Dorsolateral prefrontal cortex (tissue), 120 donors: ENCODE measurements at regions of chr22 and their contacts with region 1.

Region 1: GRCh38 chr22:48629631-48630432 is 1197.8 kb downstream of the BRD1 start:
- DNase-seq: peak in 9 of 10 donors; percentile 60 to 86 (median 80)
- H3K4me3 ChIP-seq: peak overlapping the region in 7 of 59 donors; percentile 7 to 51 (median 30)
- H3K27ac ChIP-seq: peak overlapping the region in 58 of 59 donors; percentile 50 to 99 (median 92)
- H3K27me3 ChIP-seq: no peaks in the 10 kb centered on the region
- CTCF ChIP-seq: no peak

Region 2: DNA sequence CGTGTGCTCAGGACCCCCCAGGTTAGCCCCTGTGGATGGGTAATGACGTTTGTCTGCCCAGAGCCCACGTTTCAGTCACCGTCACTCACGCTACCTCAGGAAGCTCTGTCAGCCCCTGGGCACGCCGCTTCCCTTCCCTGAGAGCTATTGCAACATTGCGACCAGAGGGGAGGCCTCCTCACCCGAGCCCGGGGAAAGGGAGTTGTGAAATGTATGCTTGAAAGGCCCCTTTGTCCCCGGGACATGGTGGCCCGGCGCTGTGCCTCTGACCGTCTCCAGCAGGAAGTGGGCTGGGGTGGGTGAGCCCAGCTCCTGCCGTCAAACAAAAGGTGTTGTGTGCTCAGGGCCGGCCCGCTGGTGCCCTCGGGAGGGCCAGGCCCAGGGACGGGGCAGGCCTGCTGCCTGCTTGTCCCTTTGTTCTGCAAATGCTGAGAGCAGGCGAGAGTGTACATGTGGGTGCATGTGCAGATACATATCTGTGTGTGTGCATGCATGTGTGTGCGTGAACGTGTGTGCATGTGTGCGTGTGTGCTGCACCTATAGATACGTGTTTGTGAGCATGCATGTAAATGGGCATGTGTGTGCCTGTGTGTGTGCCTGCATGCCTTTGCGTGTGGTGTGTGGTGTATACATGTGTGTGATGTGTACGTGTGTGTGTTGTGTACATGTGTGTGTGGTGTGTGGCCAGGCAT is 72.9 kb after region 1 on chr22:
- intact Hi-C with region 1: loop called in 1 of 2 experiments (anchors 5 kb)
- DNase-seq: peak in 9 of 10 donors; percentile 72 to 91 (median 88)
- H3K4me3 ChIP-seq: peak overlapping the region in 1 of 59 donors; percentile 23
- H3K27ac ChIP-seq: peak overlapping the region; percentile 24 to 94 (median 85)
- H3K27me3 ChIP-seq: no peaks in the 10 kb centered on the region
- CTCF ChIP-seq: peak in 24 of 56 donors; percentile 5 to 50 (median 34)

Region 3: GRCh38 chr22:49046546-49047361 is 416.9 kb after region 1 on chr22:
- intact Hi-C with region 1: no loop called
- DNase-seq: peak in 9 of 10 donors; percentile 38 to 73 (median 62)
- H3K4me3 ChIP-seq: no peak overlapping the region
- H3K27ac ChIP-seq: peak overlapping the region in 6 of 59 donors; percentile 11 to 51 (median 36)
- H3K27me3 ChIP-seq: peaks cover 0 to 23% (median 0%) of the 10 kb centered on the region in 45 donors
- CTCF ChIP-seq: peak in 54 of 56 donors; percentile 12 to 74 (median 62)